ENCODE measurements at regions of chr4 and their contacts with region 1.

Region 1: GRCh38 chr4:103019308-103020124 is at the start of gene SLC9B1:
- DNase-seq: peak; percentile 99
- H3K4me3 ChIP-seq: peak within 1 kb of the TSS; percentile 30 to 52 (median 48)
- H3K27ac ChIP-seq: peak within 1 kb of the TSS; percentile 84 to 89 (median 89)
- H3K4me1 ChIP-seq: peaks cover 0 to 13% (median 9%) of the 10 kb centered on the region in 4 donors
- H3K27me3 ChIP-seq: no peaks in the 10 kb centered on the region
- CTCF ChIP-seq: no peak
- EP300 ChIP-seq: peak in 3 of 4 donors; percentile 37 to 94 (median 77)
- POLR2A ChIP-seq: peak; percentile 78 to 82
- total RNA-seq, gene SLC9B1: 0.82 to 3.9 (median 1.2) TPM in 3 of 4 donors, not detected in the other

Region 2: DNA sequence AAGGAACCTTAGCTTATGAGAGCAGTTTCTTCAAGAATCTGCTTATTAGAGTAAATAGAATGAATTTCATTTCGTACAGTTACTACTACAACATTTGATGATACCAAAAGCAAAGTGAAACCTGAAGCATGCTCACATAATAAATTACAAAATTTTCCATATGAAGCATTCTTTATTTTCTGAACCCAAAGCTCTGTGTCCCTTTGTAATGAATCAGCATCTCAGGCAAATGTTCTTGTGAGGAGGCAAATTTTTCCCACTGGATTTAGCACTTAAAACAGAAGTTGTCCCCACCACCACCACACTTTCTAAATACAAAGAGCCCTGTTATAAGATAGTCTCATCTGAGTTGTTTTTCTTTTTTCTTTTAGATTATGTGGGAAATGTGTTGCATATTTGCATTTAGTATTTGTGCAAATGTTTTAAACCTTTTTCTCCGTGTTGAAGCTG is 589.0 kb before region 1 on chr4:
- intact Hi-C with region 1: loop called (anchors 5 kb)
- DNase-seq: no peak
- H3K4me3 ChIP-seq: peak overlapping the region; percentile 45 to 58 (median 54)
- H3K27ac ChIP-seq: peak overlapping the region; percentile 60 to 76 (median 63)
- H3K4me1 ChIP-seq: no peaks in the 10 kb centered on the region
- H3K27me3 ChIP-seq: no peaks in the 10 kb centered on the region
- CTCF ChIP-seq: no peak
- EP300 ChIP-seq: no peak
- POLR2A ChIP-seq: no peak

Region 3: DNA sequence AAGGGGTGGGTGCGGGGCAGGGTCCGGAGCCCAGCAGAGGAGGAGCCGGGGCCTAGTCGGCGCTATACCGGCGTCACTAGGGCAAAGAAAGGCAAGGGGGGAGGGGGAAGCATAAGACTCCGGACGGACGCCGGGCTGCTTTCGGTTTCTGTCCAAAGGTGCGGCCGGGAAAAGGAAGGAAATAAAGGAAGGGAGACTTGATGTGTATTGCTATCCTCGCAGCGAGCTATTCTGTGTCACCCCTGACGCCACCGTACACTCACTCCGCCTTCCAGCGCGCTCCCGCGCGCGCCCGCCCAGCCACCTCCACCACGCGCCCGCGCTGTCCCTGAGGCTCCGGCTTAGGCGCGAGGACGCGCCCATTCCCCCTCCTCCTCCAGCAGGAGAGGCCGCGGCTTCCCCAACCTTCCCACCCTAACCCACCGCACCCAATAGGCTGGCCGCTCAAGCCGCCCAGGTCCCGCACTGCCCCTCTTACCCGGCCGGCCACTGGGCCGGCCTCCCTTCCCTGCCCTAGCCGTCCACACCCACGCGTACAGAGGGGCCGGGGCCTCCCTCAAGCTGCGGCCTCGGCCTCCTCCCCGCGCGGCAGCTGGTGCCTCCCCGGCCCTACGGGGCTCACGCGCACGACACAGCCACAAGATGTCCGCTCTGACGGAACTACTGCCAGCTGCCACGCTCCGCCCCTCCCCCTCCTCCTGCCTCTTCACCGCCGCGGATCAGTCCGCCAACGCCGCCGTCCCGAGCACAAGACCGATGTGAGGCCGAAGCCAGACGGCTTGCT is 192.4 kb before region 1 on chr4 and contains the start of gene UBE2D3:
- intact Hi-C with region 1: loop called (anchors 2 kb)
- DNase-seq: peak; percentile 99
- H3K4me3 ChIP-seq: peak within 1 kb of the TSS; percentile 90 to 96 (median 93)
- H3K27ac ChIP-seq: peak within 1 kb of the TSS; percentile 99 to 100 (median 100)
- H3K4me1 ChIP-seq: peaks cover 4 to 43% (median 35%) of the 10 kb centered on the region in 4 donors
- H3K27me3 ChIP-seq: no peaks in the 10 kb centered on the region
- CTCF ChIP-seq: no peak
- EP300 ChIP-seq: peak in 2 of 4 donors; percentile 46 to 49
- POLR2A ChIP-seq: peak; percentile 59 to 82
- total RNA-seq, gene UBE2D3: 273 to 404 (median 305) TPM

Region 4: DNA sequence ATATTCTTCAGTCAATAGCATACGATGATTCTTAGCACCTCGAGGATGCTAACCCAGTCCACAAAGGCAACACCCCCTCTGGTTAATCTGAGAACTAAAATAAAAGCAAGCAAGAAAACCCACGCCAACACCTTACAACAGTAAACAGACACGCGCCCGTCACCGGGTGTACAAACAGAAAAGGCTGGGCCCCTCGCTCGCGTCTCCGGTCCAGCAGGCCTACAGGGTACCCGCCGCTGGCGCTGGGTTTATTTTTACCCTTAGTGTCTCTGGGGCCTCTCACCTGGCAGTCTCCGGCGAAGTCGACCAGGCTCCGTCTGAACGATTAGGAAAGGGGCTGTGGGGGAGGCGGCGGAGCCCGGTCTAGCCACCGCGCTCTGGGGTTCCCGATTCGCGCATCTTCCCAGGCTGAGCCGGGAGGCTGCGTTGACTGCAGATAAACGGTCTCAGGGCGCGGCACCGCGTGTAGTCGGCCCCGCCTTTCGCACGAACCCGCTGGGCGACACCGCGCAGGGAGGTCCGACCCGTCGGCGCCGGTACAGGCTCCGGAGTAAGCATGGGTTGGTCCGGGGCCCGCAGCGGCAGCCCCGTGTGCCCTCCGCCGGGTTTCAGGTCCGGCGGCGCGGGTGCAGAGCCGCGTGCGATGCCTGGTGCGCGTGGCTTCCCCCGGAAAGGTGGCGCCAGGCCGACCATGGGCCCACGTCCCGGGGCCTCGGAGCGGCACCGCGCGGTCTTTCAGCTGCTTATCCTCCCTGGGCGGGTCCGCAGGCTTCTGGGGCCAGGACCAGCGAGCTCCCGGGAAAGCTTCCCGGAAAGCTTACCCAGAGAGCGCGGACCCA is 56.6 kb after region 1 on chr4:
- intact Hi-C with region 1: loop called (anchors 5 kb)
- DNase-seq: peak; percentile 86
- H3K4me3 ChIP-seq: peak overlapping the region; percentile 60 to 84 (median 64)
- H3K27ac ChIP-seq: peak overlapping the region; percentile 84 to 95 (median 88)
- H3K4me1 ChIP-seq: peaks cover 0 to 16% (median 8%) of the 10 kb centered on the region in 4 donors
- H3K27me3 ChIP-seq: no peaks in the 10 kb centered on the region
- CTCF ChIP-seq: no peak
- EP300 ChIP-seq: no peak
- POLR2A ChIP-seq: no peak